ENCODE measurements at regions of chr9 and their contacts with region 1.

Region 1: GRCh38 chr9:104927912-104928740 is at the start of gene ABCA1:
- DNase-seq: peak; percentile 95
- ATAC-seq: peak; percentile 96
- total RNA-seq, gene ABCA1: 65.8 TPM

Region 2: DNA sequence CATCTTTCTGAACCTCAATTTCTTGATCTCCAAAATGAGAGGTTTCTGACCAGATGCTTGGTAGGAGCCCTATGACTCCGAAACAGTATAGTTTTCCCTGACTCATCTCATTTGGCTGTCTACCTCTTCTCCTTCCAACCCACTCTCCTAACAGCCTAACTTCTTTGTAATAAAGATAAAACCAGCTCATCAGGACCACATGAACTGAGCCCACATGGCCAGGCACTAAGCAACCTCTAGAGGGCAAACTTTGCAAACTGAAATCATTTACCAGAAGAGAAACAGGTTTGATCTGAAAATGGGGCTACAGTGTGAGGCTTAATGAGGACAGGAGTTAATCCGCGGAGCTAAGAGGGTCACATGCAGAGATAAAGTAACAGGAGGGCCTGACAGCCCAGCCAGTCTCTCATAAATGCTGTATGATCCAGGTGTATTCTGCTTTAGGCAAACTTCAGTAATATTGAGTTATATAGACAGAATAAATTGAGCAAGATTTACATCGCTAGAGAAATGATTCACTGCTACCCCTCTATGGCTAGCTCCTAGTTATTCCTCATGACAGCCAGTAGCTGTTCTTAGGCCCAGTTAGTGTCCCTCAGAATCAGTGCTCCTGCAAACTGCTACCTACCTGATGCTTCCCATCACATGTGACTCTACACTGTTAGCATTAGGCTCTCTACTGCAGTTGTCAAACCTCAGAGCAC is 64.8 kb before region 1 on chr9:
- intact Hi-C with region 1: loop called (anchors 5 kb)
- DNase-seq: no peak
- ATAC-seq: peak; percentile 58

Region 3: DNA sequence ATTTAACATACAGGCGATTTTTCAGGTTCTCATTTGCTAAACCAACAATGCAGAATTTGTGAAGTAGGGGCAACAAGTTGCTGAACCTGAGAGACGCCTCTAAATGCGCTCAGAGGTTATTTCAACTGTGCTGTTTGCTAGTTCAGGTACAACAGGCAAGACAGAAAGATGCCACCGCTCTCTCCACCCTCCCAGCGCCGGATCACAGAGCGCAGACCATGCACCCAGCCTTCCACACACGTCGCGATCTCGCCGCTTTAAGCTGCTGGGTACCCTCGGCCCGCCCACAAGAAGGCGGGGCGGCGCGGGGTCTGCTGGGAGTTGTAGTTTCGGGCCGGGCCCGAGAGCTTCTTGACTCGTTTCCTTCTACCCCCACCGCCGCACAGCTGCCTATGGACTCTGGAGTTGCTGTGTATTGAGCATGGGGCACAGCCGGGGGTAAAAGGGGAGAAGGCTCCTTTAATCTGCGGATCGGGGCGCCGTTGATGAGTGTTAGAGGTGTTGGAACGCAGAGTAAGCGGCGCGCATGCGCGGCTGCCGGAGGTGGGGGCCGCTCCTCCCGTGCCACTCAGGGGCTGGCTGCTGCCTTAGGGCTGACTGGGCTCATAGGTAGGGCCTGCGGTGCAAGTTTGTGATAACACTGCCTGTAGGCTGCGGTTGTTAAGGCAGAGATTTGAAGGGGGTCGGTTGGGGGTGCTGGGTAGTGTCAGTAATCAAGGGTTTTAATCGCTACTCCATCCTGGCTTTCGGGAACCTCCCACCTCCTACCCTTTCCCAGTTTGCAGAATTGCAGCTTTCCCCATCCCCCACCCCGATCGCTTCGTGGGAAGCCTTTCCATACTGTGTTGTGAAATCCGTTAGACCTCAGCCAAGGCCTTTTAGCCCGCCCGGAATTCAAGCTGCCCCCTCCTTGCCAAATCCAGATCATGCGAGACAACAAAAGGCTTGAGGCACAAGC is 40.2 kb after region 1 on chr9:
- intact Hi-C with region 1: loop called (anchors 5 kb)
- DNase-seq: peak; percentile 92
- ATAC-seq: peak; percentile 95